ENCODE measurements at regions of chr11 and their contacts with region 1.

Region 1: DNA sequence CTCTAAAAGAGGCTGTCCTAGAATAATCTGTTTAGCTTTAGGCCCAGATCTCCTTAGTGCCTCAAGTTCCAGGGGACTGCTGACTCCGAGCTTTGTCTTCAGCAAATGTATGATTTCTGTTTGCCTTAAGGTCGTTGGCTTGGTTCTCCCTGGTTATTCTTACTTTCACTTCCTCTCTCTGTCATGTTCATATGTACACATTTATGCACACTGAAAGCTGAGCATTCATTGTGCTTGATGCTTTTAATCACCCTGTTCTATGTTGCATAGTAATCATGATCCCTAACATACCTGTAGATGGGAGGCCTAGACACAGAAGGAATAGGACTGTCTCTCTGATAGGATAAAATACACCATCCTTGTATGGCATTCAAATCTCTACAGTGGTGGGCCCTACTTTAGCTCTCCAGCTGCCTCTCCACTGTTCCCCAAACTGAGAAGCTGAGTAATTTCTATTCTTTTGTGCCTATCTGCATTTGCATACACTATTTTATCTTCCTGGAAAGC is 7.2 kb downstream of the PPFIBP2 start:
- DNase-seq: no peak
- ATAC-seq: peak; percentile 83
- H3K4me3 Mint-ChIP-seq: no peak overlapping the region
- H3K27ac Mint-ChIP-seq: no peak overlapping the region
- H3K4me1 Mint-ChIP-seq: peaks cover 49% of the 10 kb centered on the region
- H3K27me3 Mint-ChIP-seq: no peaks in the 10 kb centered on the region

Region 2: DNA sequence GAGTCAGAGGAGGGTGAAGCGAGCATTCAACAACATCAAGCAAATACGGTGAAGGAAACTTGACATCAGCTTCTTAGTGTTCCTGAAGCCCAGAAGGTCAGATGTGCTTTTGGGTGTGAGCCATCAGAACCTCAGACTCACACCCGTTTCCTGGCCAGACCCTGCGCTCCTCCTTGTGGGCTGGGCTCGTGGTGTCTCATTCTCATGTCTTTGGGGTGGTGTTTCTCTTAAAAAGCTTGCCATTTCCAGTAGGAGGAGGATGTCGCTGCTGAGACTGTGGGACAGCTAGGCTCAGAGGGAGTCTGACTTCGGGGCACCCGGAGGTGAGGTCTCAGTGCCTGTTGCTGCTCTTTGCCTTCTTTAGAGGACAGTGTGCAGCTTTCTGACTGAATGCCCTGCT is 17.0 kb after region 1 on chr11:
- CTCF ChIA-PET with region 1: interaction called, 17 read pairs
- POLR2A ChIA-PET with region 1: interaction called, 4 read pairs
- intact Hi-C with region 1: no loop called
- DNase-seq: peak; percentile 54
- ATAC-seq: peak; percentile 88
- H3K4me3 Mint-ChIP-seq: no peak overlapping the region
- H3K27ac Mint-ChIP-seq: peak overlapping the region; percentile 30
- H3K4me1 Mint-ChIP-seq: peaks cover 60% of the 10 kb centered on the region
- H3K27me3 Mint-ChIP-seq: no peaks in the 10 kb centered on the region

Region 3: DNA sequence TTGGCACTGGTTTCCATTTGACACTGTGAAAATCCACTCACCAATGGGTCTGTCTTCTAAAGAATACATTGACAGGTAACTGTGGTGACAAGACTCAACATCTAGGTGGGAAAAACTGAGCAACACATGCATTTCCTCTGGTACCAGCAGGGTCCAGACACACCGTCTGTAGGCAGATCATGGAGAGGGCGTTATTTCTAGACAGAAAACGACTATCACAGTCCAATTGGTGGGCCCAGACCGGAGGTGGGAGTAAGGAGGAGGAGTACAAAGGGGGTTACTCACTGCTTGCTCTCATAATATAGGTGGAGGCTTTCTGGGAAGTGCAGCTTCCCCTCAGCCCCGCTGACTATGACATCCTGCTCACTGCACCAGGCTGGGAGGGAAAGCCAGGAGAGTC is 175.4 kb after region 1 on chr11:
- CTCF ChIA-PET with region 1: interaction called, 10 read pairs
- POLR2A ChIA-PET with region 1: no interaction called
- intact Hi-C with region 1: no loop called
- DNase-seq: peak; percentile 20
- ATAC-seq: peak; percentile 75
- H3K4me3 Mint-ChIP-seq: no peak overlapping the region
- H3K27ac Mint-ChIP-seq: no peak overlapping the region
- H3K4me1 Mint-ChIP-seq: peaks cover 4% of the 10 kb centered on the region
- H3K27me3 Mint-ChIP-seq: peaks cover 24% of the 10 kb centered on the region

Measured in activated CD4-positive, alpha-beta T cell treated with anti-CD3 and anti-CD28 coated beads for 36 hours (primary cell).